ENCODE measurements at regions of chr4 and their contacts with region 1.

Region 1: DNA sequence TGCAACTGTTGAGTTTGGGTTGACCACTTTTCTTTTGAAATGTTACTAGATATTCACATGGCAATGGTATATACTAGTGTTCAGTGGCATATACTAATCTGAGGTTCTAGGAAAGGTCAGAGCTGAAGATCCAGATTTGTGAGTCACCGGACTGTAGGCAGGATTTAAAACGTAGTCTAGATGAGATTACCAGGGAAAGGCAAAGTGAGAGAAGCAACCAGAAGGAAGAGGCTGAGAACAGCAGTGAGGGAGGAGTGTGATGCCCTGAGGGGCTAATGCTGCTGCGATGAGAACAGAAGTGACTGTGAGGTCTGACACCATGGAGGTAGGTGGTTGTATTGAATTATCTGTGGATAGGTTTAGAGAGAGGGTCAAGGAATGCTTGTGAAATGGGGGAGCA is 9.7 kb upstream of the PLA2G12A start:
- DNase-seq: no peak
- ATAC-seq: no peak
- H3K4me3 ChIP-seq: no peak overlapping the region
- H3K4me3 Mint-ChIP-seq: no peak overlapping the region
- H3K27ac ChIP-seq: no peak overlapping the region
- H3K27ac Mint-ChIP-seq: no peak overlapping the region
- H3K4me1 ChIP-seq: no peaks in the 10 kb centered on the region
- H3K4me1 Mint-ChIP-seq: no peaks in the 10 kb centered on the region
- H3K27me3 ChIP-seq: no peaks in the 10 kb centered on the region
- H3K27me3 Mint-ChIP-seq: no peaks in the 10 kb centered on the region
- CTCF ChIP-seq: no peak

Region 2: DNA sequence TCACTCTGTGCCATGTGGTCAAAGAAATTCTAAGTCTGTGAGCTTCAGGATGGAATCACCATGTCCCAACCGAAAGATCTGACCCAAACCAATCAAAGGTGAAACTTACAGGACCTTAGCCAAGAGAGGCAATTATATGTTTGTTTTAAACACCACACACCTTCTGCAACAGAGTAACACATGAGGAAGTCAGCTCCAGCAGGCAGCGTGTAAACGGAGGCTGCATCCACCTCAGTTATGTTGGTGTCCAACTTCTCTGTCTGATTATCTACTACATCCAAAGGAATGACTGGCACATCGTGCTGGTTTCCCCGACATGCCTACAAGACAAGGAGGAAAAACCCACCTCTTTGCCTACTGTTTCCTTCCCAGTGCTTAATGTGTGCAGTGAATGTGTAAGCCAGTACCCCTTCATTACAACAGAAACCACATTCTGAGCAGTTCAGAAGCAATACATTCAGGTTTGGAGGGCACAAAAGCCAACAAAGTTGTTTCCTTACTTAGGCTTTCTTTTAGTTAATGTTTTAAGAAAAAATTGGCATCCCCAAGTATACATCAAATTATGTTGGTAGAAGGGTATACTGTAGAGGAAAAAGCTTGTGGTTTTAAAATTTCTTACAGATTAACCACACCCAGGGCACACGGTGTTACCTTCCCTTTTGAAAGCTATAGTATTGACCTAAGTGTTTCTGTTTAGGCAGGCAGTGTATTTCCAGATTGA is 48.7 kb before region 1 on chr4:
- CTCF ChIA-PET with region 1: no interaction called
- POLR2A ChIA-PET with region 1: no interaction called
- intact Hi-C with region 1: loop called in 1 of 2 experiments (anchors 1 kb)
- DNase-seq: peak in 2 of 9 experiments; percentile 30 to 56
- ATAC-seq: peak; percentile 85
- H3K4me3 ChIP-seq: no peak overlapping the region
- H3K4me3 Mint-ChIP-seq: peak overlapping the region; percentile 64
- H3K27ac ChIP-seq: peak overlapping the region in 1 of 2 experiments; percentile 62
- H3K27ac Mint-ChIP-seq: peak overlapping the region; percentile 87
- H3K4me1 ChIP-seq: peaks cover 27% of the 10 kb centered on the region
- H3K4me1 Mint-ChIP-seq: peaks cover 32% of the 10 kb centered on the region
- H3K27me3 ChIP-seq: no peaks in the 10 kb centered on the region
- H3K27me3 Mint-ChIP-seq: no peaks in the 10 kb centered on the region
- CTCF ChIP-seq: no peak

Region 3: DNA sequence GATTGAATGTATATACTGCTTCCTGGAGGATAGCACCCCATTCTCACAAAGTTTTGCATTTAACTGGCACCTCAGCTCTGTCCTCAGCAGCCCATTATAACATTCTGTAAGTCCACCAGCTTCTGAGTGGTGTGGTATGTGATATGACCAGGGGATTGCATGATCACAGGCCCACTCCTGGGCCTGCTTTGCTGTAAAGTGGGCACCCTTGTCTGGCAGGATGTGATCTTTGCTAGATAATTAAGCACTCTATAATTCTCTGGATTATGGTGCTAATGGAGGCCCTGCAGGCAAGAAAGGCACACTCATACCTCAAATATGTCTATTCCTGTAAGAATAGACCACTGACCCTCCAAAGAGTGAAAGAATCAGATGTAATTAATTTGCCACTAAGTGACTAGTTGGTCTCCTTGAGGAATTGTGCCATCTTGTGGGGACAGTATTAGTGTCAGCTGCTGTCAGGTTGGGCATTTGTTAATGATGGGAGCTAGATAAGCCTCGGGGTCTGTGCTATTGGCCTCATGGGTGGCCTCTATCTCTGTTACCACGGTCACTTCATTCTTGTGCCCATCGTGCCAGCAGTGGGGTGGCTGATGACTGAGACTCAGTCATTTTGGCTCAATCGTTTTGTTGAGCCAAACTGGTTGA is 64.5 kb after region 1 on chr4:
- CTCF ChIA-PET with region 1: no interaction called
- POLR2A ChIA-PET with region 1: no interaction called
- intact Hi-C with region 1: no loop called
- DNase-seq: peak in 2 of 9 experiments; percentile 54 to 59
- ATAC-seq: no peak
- H3K4me3 ChIP-seq: no peak overlapping the region
- H3K4me3 Mint-ChIP-seq: no peak overlapping the region
- H3K27ac ChIP-seq: no peak overlapping the region
- H3K27ac Mint-ChIP-seq: no peak overlapping the region
- H3K4me1 ChIP-seq: no peaks in the 10 kb centered on the region
- H3K4me1 Mint-ChIP-seq: no peaks in the 10 kb centered on the region
- H3K27me3 ChIP-seq: no peaks in the 10 kb centered on the region
- H3K27me3 Mint-ChIP-seq: peaks cover 5% of the 10 kb centered on the region
- CTCF ChIP-seq: no peak